ENCODE measurements at regions of chrX and their contacts with region 1.

Region 1: DNA sequence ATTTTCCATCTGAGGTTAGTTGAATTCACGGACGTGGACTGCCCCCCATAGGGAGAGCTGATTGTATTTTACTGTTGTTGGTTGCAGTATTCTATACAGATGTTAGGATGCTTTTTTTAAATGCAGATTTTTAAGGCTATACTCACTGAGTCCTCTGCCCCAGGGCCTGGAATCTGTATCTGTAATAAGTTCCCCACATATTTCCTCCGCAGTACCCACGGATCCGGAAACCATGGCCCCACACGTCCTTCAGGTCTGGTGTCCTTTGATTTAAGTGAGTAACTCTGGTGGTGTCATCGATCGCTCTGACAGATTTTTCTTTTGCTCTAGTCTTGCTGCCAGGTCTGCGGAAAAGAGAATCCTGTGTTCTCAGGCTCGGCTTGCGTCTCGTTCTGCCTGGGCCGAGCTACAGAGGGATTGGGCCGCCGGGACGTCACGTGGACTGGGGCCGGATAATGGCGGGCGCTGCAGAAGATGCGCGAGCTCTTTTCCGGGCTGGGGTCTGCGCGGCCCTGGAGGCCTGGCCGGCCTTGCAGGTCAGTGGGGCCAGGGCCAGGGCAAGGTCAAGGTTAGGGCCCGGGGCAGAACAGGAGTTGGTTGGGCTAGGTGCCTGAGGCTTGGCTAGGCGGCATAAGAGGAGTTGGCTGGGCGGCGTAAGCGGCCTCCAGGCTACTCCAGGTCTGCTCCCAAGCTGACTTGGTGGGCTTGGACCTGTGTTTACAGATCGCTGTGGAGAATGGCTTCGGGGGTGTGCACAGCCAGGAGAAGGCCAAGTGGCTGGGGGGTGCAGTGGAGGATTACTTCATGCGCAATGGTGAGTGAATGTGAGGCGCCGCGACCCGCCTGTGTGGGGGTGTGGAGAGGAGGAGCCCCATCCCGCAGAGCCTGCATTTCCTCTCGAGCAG is at the start of gene TSR2:
- DNase-seq: peak; percentile 50 to 80 (median 74)
- ATAC-seq: peak; percentile 99
- H3K4me3 ChIP-seq: peak within 1 kb of the TSS; percentile 94
- H3K4me3 Mint-ChIP-seq: peak within 1 kb of the TSS; percentile 84 to 100 (median 92)
- H3K27ac ChIP-seq: peak within 1 kb of the TSS; percentile 81
- H3K27ac Mint-ChIP-seq: peak within 1 kb of the TSS; percentile 73 to 94 (median 86)
- H3K4me1 ChIP-seq: peaks cover 8 to 12% of the 10 kb centered on the region in 2 donors
- H3K4me1 Mint-ChIP-seq: peaks cover 15 to 39% (median 26%) of the 10 kb centered on the region in 7 donors
- H3K27me3 ChIP-seq: no peaks in the 10 kb centered on the region
- H3K27me3 Mint-ChIP-seq: no peaks in the 10 kb centered on the region
- total RNA-seq, gene TSR2: 33.6 to 43.3 (median 40.5) TPM

Region 2: GRCh38 chrX:54357414-54358377 is 82.5 kb before region 1 on chrX and contains the start of gene WNK3:
- CTCF ChIA-PET with region 1: no interaction called
- POLR2A ChIA-PET with region 1: no interaction called
- intact Hi-C with region 1: loop called in 1 of 2 experiments (anchors 1 kb)
- DNase-seq: peak; percentile 9 to 48 (median 35)
- ATAC-seq: peak; percentile 72
- H3K4me3 ChIP-seq: peak within 1 kb of the TSS; percentile 52
- H3K4me3 Mint-ChIP-seq: peak within 1 kb of the TSS; percentile 75 to 92 (median 88)
- H3K27ac ChIP-seq: no peak within 1 kb of the TSS
- H3K27ac Mint-ChIP-seq: peak within 1 kb of the TSS; percentile 22 to 85 (median 58)
- H3K4me1 ChIP-seq: no peaks in the 10 kb centered on the region
- H3K4me1 Mint-ChIP-seq: peaks cover 7 to 25% (median 20%) of the 10 kb centered on the region in 7 donors
- H3K27me3 ChIP-seq: no peaks in the 10 kb centered on the region
- H3K27me3 Mint-ChIP-seq: peaks cover 0 to 52% (median 21%) of the 10 kb centered on the region in 5 donors
- total RNA-seq, gene WNK3: 0.15 to 0.95 (median 0.67) TPM

Region 3: GRCh38 chrX:54470054-54470760 is 30.0 kb after region 1 on chrX:
- CTCF ChIA-PET with region 1: no interaction called
- POLR2A ChIA-PET with region 1: no interaction called
- intact Hi-C with region 1: no loop called
- DNase-seq: no peak
- ATAC-seq: no peak
- H3K4me3 ChIP-seq: no peak overlapping the region
- H3K4me3 Mint-ChIP-seq: no peak overlapping the region
- H3K27ac ChIP-seq: no peak overlapping the region
- H3K27ac Mint-ChIP-seq: no peak overlapping the region
- H3K4me1 ChIP-seq: no peaks in the 10 kb centered on the region
- H3K4me1 Mint-ChIP-seq: no peaks in the 10 kb centered on the region
- H3K27me3 ChIP-seq: no peaks in the 10 kb centered on the region
- H3K27me3 Mint-ChIP-seq: no peaks in the 10 kb centered on the region

Region 4: DNA sequence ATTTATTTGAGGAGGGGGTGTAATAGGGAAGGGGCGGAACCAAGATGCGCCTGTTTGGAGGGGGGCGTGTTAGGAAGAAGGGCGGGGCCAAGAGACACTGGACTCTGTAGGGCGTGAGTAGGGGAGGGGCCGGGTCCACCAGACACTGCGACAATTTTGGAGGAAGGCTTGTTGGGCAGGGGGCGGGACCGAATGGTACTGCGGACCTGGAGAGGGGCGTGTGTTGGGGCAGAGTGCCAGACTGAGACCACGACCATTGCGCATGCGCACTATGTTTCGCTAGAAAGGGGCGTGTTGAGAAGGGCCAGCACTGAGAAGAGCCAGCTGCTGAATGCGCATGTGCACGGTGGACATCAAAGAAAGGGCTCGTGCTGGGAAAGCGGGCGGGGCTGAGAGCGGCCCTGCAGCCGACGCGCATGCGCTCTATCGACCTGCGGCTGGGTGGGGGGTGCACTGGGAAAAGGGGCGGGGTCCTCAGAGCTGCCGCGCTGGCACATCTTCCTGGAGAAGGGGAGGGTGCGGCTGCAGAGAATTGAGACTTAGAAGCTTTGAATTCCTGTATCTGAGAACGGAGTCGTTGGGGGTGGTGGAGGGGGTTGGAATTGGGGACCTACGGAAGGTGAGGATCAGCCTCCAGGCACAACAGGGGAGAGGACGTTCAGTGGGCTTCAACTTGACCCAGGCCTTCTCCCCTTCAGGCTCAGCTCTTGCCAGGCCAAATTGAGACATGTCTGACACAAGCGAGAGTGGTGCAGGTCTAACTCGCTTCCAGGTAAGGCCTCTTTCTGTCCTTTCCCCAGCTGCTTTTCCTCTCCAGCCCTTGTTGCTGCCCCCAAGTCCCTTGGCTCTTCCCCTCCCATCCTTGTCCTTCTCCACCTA is 368.6 kb after region 1 on chrX:
- CTCF ChIA-PET with region 1: no interaction called
- POLR2A ChIA-PET with region 1: no interaction called
- intact Hi-C with region 1: loop called (anchors 1 to 5 kb)
- DNase-seq: peak; percentile 63 to 90 (median 84)
- ATAC-seq: peak; percentile 84
- H3K4me3 ChIP-seq: peak overlapping the region; percentile 93
- H3K4me3 Mint-ChIP-seq: peak overlapping the region; percentile 90 to 99 (median 96)
- H3K27ac ChIP-seq: peak overlapping the region; percentile 89
- H3K27ac Mint-ChIP-seq: peak overlapping the region; percentile 93 to 98 (median 96)
- H3K4me1 ChIP-seq: no peaks in the 10 kb centered on the region
- H3K4me1 Mint-ChIP-seq: peaks cover 5 to 28% (median 19%) of the 10 kb centered on the region in 7 donors
- H3K27me3 ChIP-seq: no peaks in the 10 kb centered on the region
- H3K27me3 Mint-ChIP-seq: peaks cover 0 to 25% (median 0%) of the 10 kb centered on the region in 5 donors

Measured in naive thymus-derived CD4-positive, alpha-beta T cell (primary cell).